Right ventricle myocardium inferior (tissue), 1 donor: ENCODE measurements at regions of chr19 and their contacts with region 1.

Region 1: DNA sequence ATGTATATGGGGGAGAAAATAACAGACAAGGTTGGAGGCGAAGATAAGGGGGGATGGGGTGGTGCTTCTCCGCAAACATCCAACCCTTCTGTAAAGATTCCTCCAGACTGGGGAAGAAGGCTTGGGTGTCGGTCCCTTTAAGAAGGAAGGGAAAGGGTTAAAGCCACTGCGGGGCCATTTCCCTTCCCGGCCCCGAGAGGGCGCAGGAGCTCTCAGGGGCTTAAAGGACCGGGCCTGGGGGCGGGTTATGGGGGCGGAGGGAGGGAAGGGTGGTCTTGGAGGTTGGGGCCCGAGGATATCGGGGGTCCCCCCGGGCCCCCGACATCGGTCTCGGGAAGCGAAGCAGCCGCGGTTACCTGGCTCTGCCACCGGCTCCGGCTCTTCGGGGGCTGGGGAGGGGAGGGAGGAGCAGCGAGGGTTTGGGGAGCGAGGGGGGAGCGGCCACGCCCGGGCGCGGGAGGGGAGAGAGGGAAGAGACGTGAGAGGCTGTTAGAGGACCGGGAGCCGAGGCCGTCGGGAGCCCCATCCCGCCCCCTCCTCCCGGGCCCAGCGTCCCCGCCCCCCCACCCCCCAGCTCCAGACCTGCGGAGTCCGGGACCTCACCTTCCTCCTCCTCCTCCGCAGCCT is 2.8 kb downstream of the TNNT1 start:
- DNase-seq: no peak
- ATAC-seq: no peak

Region 2: DNA sequence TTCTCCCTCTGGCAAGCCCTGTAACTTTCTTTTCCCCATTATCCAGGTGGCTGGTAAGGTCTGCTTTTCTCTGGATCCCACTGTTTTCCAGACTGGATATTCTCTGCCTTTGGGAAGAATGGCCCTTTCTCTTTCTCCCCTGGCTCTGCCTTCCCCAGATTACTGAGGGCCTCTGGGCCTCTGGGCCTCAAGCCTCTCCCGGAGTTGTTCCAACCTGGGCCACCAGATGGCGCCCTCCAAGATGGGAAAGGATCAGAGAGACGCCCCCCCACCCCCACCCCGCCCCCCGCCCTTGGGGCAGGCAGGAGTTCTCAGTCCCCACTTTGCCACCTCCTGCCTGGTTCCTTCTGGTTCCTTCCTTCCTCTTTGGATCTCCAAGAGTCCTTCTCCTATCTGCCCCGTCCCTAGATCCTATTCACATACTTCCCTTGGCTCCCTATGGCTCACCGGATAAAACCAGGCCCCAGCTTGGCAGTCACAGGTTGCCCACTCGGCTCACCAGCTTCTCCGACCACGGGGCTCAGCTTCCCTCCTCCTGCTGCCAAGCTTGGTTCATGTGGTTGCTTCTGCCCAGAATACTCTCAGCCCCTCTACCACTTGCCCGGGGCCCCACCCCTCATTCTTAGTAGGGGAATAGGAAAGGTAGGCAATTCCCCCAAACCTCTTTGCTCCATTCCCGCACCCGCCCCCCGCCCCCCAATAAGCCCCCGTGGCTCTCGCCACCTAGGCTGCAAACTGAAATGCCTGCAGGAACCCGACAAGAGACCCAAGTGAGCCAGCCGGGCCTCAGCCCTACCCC is 57.4 kb before region 1 on chr19:
- intact Hi-C with region 1: no loop called
- DNase-seq: peak; percentile 85
- ATAC-seq: peak; percentile 28

Region 3: DNA sequence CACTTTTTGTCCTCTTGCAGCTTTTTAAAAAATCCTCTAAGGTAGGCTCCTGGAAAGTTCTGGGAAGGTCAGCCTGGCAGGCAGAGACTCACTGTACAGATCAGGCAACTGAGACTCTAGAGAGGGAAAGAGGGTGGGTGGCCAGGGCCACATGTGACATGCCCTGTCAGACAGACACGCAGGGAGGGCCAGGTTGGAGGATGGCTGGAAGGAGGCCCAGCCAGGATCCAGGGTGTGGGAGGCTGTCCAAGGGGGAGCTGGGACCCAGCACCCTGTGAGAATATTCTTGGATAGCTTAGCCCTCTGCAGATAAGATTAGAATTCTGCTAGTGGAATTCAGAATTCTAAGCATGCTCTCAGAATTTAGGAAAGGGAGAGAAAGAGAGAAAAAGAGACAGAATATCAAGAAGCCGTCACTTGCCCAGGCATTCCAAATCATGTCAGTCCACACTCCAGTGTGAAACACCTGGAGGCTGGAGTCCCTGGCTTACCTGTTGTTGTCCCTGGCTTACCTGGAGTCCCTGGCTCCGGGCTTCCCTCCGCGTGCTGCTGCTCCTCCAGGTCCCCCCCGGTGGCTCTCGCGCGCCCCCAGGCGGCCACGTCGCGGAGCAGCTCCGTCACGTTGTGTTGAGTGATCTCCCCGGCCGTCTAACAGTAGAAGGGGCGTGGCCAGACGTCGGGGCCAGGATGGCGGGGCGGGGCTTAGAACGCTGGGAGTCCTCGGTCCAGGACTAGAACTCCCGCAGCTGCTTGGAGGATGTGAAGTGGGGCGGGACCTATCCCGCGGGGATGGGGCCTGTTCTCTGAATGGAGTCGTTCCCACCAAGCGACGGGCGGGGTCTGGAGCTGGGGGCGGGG is 14.2 kb after region 1 on chr19:
- intact Hi-C with region 1: loop called (anchors 2 kb)
- DNase-seq: peak; percentile 91
- ATAC-seq: peak; percentile 54

Region 4: DNA sequence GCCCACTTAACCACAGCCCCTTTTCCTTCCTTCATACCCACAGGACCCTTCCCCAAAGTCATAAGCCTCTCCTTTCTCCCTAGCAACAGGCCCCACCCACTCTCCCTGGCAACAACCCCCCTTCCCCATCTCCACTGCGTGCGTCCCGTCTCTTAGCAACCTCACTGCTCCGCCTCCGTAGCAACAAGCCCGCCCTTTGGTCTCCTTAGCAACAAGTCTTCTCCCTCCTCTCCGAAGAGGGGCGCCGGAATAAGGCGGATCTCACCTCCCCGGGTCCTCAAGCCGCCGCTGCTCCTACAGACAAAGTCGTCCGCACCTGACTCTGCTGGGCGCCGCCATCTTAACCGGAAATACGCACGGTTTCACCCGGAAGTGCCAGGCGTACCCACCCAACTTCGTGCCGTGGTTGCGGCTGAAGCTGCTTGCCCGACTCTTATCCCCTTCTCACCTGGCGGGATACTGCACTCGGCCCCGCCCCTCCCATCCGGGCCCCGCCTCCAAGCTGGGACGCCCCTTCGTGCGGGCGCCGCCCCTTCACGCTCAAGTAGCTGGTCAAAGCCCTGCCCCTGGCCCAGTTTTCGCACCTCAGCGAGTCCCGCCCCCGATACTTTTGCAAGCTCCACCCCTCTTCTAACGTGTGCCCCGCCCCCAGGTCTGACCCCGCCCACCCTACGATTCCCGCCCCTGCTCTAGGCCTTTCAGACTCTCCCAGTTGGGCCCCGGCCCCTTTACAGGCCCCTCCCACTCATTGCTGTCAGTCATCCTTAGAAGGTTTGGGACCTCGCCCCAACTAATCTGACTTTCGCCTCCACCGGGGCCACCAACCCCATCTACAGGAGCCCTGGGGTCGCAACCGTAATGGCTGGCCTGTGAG is 133.8 kb after region 1 on chr19 and contains the start of gene HSPBP1:
- intact Hi-C with region 1: no loop called
- DNase-seq: peak; percentile 94
- ATAC-seq: peak; percentile 90
- total RNA-seq, gene HSPBP1: 30.2 TPM

Region 5: GRCh38 chr19:55418185-55418584 is 272.0 kb after region 1 on chr19:
- intact Hi-C with region 1: loop called (anchors 2 kb)
- DNase-seq: no peak
- ATAC-seq: peak; percentile 88

Region 6: GRCh38 chr19:55503502-55504251 is 357.5 kb after region 1 on chr19:
- intact Hi-C with region 1: loop called (anchors 2 kb)
- DNase-seq: peak; percentile 95
- ATAC-seq: peak; percentile 95

Region 7: DNA sequence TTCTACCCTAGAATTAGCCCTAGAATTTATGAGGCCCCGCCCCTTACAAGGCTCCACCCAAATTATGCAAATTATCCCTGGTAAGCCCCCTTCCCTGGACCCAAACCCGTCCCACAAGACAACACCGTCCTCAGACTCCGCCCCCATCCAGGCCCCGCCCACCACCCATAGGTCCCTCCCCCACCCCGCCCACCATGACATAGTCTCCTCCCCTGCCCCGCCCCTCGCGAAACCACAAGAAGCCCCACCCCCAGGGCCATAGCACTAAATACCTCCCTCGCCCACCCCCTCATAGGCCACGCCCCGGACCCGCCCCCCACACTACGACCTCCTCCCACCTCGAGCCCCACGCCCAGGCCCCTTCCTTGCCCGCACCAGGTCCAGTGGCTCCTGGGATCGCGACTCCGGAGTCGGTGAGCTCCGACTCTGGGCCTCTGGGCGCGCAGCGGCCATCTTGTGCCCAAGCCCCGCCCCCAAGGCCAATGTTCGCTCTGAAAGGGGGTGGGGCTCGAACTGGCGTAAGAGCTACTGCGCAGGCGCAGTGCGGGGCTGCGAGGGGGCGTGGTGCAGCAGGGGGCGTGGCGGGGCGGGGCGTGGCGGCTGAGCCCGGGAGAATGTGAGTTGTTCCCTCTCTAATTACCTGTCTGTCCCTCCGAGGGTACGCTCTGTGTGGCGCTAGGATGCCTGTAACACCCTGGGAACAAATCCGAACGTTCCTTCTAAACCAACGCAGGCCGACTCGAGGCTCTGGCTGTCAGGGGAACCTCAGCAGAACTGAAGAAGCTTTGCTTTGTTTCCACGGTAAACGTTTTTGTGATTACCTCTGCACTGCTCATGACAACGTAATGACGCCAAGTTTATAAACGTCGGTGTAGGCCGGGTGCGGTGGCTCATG is 478.2 kb after region 1 on chr19 and contains the start of gene ZNF784:
- intact Hi-C with region 1: loop called (anchors 10 kb)
- DNase-seq: peak; percentile 98
- ATAC-seq: peak; percentile 93
- total RNA-seq, gene ZNF784: 11.1 TPM